ENCODE measurements at regions of chr5 and their contacts with region 1.

Region 1: GRCh38 chr5:178859625-178860531 is at the start of gene ZNF354B:
- DNase-seq: peak; percentile 91 to 92 (median 91)
- ATAC-seq: peak; percentile 98
- H3K4me3 ChIP-seq: peak within 1 kb of the TSS; percentile 90
- H3K4me1 ChIP-seq: no peaks in the 10 kb centered on the region
- CTCF ChIP-seq: no peak
- total RNA-seq, gene ZNF354B: 8.3 to 20.2 (median 13.7) TPM

Region 2: DNA sequence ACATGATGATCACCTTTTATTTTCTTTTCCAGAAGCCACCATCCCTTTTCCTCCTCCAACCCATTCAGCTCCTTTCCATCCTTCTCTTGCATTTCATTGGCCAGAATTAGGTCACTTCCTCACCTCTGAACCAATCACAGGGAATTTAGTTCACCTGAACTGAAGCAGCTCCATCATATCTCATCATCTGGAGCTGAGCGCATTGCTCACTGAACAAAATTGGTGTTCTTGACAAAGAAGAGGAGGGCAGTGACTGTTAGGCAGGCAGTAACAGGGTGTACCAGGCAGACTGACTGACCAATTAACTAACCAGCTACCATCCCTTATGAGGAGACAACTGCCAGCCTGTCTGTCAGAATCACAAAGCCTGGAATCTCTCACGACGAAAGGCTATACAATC is 127.6 kb before region 1 on chr5:
- intact Hi-C with region 1: loop called in 1 of 2 experiments (anchors 10 kb)
- DNase-seq: no peak
- ATAC-seq: no peak
- H3K4me3 ChIP-seq: no peak overlapping the region
- H3K4me1 ChIP-seq: no peaks in the 10 kb centered on the region
- CTCF ChIP-seq: no peak

Region 3: DNA sequence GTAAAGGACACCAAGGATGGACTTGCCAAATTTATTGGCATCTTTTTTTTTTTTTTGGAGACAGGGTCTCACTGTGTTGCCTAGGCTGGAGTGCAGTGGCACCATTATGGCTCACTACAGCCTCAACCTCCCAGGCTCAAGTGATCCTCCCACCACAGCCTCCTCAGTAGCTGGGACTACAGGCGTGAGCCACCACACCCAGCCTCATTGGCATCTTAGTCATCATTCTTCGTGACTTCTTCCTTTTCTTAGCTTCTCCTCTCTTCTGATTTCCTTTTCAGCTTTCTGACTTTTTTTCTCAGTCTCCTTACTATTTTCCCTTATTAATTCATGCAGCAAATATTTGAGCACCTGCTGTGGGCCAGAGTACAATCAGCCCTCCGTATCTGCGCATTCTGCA is 878.9 kb after region 1 on chr5:
- intact Hi-C with region 1: no loop called
- DNase-seq: no peak
- ATAC-seq: peak; percentile 48
- H3K4me3 ChIP-seq: no peak overlapping the region
- H3K4me1 ChIP-seq: peaks cover 14% of the 10 kb centered on the region
- CTCF ChIP-seq: no peak